ENCODE measurements at regions of chr1 and their contacts with region 1.

Region 1: DNA sequence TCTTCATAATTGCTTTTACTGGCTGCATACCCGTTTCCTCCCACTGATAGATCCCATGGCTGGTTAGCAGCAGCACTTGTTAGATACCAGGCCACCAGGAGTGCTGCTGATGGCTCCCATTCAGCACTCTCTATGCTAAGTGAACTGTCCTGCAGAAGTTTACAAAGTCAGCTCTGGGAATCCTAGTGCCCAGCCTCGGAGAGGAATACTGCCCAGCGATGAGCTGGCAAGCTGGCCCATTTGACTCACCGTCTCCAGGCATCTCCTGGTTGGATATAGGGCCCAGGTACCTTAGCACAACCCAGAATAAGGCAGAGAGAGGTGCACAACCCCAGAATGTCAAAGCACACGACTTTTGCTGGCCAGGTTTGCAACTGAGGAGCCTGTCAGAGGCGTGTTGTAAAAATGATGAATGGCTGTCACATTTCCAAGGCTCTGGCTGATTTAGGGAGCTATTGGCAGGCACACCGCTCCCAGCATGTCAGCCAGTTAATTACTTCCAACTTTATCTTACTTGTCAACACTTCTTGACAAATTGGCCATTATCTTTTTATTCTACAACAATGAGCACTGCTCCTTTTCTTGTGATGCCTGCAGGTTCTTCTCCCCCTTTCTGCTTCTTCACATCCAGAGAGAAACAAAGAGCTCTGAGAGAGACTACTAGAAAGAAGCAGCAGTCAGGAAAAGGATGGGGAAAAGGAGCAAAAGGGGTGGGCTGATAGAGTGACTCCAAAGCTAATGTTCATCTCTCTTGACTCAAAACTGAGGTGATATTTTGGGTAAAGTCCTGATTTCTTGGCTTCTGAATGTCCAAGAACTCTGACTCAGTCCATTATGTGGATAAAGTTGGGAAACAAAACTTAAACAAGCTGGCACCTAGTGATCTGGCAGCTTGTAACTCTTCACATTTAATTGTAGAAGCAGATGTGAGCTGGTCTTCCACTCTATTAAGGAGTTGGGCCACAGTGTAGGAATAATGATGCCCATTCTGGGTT is 10.8 kb upstream of the ANGPTL7 start:
- DNase-seq: no peak
- ATAC-seq: peak; percentile 9 to 62 (median 46)
- H3K4me3 ChIP-seq: no peak overlapping the region
- H3K27ac ChIP-seq: no peak overlapping the region
- H3K4me1 ChIP-seq: peaks cover 37% of the 10 kb centered on the region
- H3K27me3 ChIP-seq: no peaks in the 10 kb centered on the region
- CTCF ChIP-seq: no peak

Region 2: GRCh38 chr1:10960411-10961299 is 217.7 kb before region 1 on chr1:
- intact Hi-C with region 1: no loop called
- DNase-seq: peak; percentile 84 to 93
- ATAC-seq: peak; percentile 82 to 86 (median 84)
- H3K4me3 ChIP-seq: peak overlapping the region; percentile 54
- H3K27ac ChIP-seq: peak overlapping the region; percentile 91
- H3K4me1 ChIP-seq: peaks cover 30% of the 10 kb centered on the region
- H3K27me3 ChIP-seq: no peaks in the 10 kb centered on the region
- CTCF ChIP-seq: peak; percentile 78

Region 3: DNA sequence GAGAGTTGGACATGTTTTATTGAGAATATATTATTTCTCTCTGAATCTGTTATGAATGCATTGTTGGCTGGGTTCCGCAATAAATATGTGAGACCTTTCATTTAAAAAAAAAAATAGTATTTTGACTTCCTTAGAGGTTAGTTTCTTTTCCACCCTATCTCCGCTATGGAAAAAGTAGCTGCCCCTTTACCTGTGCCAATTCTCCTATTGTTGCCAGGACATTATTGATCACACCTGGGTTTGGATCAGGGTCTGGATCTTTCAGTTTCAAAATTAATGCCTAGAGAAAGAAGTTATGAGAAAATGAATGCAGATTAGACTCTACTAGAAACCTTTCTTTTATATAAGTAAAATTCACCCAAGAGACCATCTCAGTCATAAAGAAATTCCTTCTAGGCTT is 54.9 kb after region 1 on chr1:
- intact Hi-C with region 1: loop called in 1 of 2 experiments (anchors 5 kb)
- DNase-seq: no peak
- ATAC-seq: no peak
- H3K4me3 ChIP-seq: no peak overlapping the region
- H3K27ac ChIP-seq: no peak overlapping the region
- H3K4me1 ChIP-seq: peaks cover 21% of the 10 kb centered on the region
- H3K27me3 ChIP-seq: no peaks in the 10 kb centered on the region
- CTCF ChIP-seq: no peak

Measured in psoas muscle (tissue), 8 donors.